ENCODE measurements at regions of chr1 and their contacts with region 1.

Region 1: DNA sequence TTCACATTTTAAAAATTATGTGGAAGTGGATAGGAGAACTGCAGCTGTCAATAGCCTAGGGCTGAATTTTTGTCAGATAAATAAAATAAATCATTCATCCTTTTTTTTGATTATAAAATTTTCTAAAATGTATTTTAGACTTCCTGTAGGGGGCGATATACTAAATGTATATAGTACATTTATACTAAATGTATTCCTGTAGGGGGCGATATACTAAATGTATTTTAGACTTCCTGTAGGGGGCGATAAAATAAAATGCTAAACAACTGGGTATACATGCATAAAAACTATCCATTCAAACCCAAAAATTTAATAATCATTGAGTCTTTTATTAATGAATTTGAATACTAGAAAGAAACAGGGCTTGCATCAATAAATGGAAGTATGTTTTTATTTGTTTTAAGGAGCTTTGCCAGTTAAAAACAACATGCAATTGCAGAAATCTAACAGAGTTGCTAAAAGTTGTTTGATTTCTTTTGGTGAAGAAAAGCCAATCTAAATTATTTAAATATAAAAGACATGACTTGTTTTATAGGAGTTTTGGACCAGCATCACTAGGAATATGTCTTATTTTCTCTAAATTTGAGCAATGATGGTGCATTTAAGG is 31.4 kb downstream of the CLCA1 start:
- DNase-seq: peak; percentile 21
- CTCF ChIP-seq: peak; percentile 81

Region 2: DNA sequence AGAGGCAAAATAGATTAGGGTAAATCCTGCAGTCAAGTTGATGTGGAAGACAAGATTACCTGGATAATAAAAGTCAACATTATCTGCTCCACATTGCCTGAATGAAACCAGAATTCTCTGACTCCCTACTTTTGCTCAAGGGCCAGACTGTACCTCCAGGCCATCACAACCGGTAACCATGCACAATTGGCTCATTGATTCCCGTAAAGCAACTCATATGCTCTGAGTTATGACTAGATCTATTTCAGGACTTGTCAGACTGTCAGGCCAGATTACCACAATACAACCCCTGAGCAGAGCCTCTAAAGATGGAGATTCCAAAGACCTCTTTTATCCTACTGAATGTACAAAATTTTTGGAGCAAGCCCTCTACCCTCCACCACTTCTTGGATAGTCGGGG is 194.4 kb before region 1 on chr1:
- CTCF ChIA-PET with region 1: no interaction called
- POLR2A ChIA-PET with region 1: no interaction called
- DNase-seq: no peak
- CTCF ChIP-seq: no peak

Region 3: GRCh38 chr1:86380257-86380861 is 119.7 kb before region 1 on chr1:
- CTCF ChIA-PET with region 1: interaction called, 81 read pairs
- POLR2A ChIA-PET with region 1: no interaction called
- DNase-seq: peak; percentile 37
- CTCF ChIP-seq: peak; percentile 70

Region 4: DNA sequence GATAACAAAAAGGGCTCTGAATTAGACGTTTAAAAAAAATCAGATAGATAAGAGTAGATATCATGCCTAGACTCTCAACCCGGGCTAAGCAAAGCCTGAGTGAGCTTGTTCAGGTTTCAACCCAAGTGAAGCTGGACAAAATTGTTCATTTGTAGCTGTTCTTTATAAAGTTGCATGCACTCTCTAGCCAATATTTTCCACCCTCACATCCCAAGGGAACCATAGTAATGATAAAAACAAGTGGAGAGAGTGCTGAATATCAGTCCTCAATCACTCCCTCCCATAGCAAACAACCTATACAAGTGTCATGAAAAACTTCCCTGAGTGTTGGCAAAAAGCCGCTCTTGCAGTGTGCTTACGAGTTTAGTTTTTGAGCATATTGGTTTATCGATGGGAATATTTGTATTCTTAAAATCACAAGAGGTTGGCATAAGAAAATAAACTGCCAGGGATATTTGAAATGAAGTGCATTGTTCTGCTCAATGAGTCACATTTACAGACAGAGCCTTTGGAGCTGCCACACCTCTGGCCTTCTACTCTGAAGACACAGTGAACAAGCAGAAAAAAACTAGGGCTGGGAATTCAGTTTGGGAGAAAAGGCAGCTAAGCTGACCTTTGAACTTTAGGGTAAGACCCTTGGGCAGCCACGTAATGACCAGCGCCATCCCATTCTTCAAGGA is 78.3 kb before region 1 on chr1:
- CTCF ChIA-PET with region 1: interaction called, 16 read pairs
- POLR2A ChIA-PET with region 1: no interaction called
- DNase-seq: no peak
- CTCF ChIP-seq: no peak

Region 5: GRCh38 chr1:86470859-86471258 is 29.2 kb before region 1 on chr1:
- CTCF ChIA-PET with region 1: interaction called, 54 read pairs
- POLR2A ChIA-PET with region 1: no interaction called
- DNase-seq: peak; percentile 28
- CTCF ChIP-seq: no peak

Region 6: DNA sequence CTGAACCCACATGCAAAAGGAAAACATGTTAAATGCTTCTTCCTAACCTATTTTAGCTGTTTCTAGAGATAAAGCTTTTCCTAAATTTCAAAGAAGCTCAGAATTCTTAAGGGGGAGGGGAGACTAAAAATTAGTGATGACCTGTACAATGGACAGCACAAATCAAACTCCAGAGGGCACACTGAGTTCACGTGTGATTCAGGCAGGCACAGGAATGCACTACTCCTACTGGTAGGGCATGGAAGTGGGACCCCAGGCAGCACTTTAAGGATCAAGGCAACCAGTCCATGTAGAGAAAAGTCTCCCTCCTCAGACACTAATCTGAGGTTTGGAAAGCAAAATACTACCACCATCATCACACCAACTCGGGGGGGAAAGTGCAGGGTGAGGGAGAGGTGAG is 15.5 kb after region 1 on chr1:
- CTCF ChIA-PET with region 1: interaction called, 26 read pairs
- POLR2A ChIA-PET with region 1: no interaction called
- DNase-seq: no peak
- CTCF ChIP-seq: no peak